CD8-positive, alpha-beta T cell (primary cell): ENCODE measurements at regions of chr11 and their contacts with region 1.

Region 1: GRCh38 chr11:85810871-85811611 is at the start of gene SYTL2:
- DNase-seq: peak; percentile 53 to 89 (median 74)
- ATAC-seq: peak; percentile 78
- H3K4me3 ChIP-seq: peak within 1 kb of the TSS; percentile 68 to 85
- H3K4me3 Mint-ChIP-seq: peak within 1 kb of the TSS; percentile 93
- H3K27ac ChIP-seq: peak within 1 kb of the TSS; percentile 50 to 56
- H3K27ac Mint-ChIP-seq: peak within 1 kb of the TSS; percentile 93
- H3K4me1 ChIP-seq: peaks cover 19% of the 10 kb centered on the region
- H3K4me1 Mint-ChIP-seq: peaks cover 48% of the 10 kb centered on the region
- H3K27me3 ChIP-seq: no peaks in the 10 kb centered on the region
- H3K27me3 Mint-ChIP-seq: peaks cover 2% of the 10 kb centered on the region
- CTCF ChIP-seq: no peak
- total RNA-seq, gene SYTL2: 37.2 to 43.6 TPM

Region 2: DNA sequence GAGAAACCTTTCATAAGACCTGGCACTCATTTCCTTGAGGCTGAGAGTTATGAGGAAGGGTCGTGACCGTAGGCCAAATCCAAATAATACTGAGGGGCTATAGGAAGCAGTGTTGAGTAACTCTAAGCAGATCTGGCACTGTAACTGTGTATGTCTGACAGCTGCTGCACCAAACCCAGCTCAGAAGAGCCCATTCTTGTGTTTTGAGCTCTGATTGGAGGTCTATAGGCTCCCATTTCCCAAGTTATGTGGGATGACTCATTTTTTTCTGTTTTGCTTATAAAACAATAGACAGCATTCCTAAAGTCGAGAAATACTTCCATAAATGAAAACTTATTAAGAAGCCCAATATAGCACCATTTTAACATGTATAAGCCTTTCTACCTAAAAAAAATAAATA is 829.7 kb before region 1 on chr11:
- CTCF ChIA-PET with region 1: no interaction called
- POLR2A ChIA-PET with region 1: no interaction called
- intact Hi-C with region 1: no loop called
- DNase-seq: no peak
- ATAC-seq: no peak
- H3K4me3 ChIP-seq: no peak overlapping the region
- H3K4me3 Mint-ChIP-seq: no peak overlapping the region
- H3K27ac ChIP-seq: no peak overlapping the region
- H3K27ac Mint-ChIP-seq: no peak overlapping the region
- H3K4me1 ChIP-seq: no peaks in the 10 kb centered on the region
- H3K4me1 Mint-ChIP-seq: no peaks in the 10 kb centered on the region
- H3K27me3 ChIP-seq: no peaks in the 10 kb centered on the region
- H3K27me3 Mint-ChIP-seq: no peaks in the 10 kb centered on the region
- CTCF ChIP-seq: no peak

Region 3: GRCh38 chr11:85647604-85648299 is 163.3 kb before region 1 on chr11 and contains the start of gene TMEM126A:
- CTCF ChIA-PET with region 1: no interaction called
- POLR2A ChIA-PET with region 1: no interaction called
- intact Hi-C with region 1: no loop called
- DNase-seq: peak; percentile 77 to 94 (median 90)
- ATAC-seq: peak; percentile 98
- H3K4me3 ChIP-seq: peak within 1 kb of the TSS; percentile 82 to 92
- H3K4me3 Mint-ChIP-seq: peak within 1 kb of the TSS; percentile 92
- H3K27ac ChIP-seq: peak within 1 kb of the TSS; percentile 75 to 90
- H3K27ac Mint-ChIP-seq: peak within 1 kb of the TSS; percentile 96
- H3K4me1 ChIP-seq: peaks cover 18% of the 10 kb centered on the region
- H3K4me1 Mint-ChIP-seq: peaks cover 39% of the 10 kb centered on the region
- H3K27me3 ChIP-seq: no peaks in the 10 kb centered on the region
- H3K27me3 Mint-ChIP-seq: peaks cover 17% of the 10 kb centered on the region
- CTCF ChIP-seq: no peak
- total RNA-seq, gene TMEM126A: 23.3 to 26.8 TPM

Region 4: DNA sequence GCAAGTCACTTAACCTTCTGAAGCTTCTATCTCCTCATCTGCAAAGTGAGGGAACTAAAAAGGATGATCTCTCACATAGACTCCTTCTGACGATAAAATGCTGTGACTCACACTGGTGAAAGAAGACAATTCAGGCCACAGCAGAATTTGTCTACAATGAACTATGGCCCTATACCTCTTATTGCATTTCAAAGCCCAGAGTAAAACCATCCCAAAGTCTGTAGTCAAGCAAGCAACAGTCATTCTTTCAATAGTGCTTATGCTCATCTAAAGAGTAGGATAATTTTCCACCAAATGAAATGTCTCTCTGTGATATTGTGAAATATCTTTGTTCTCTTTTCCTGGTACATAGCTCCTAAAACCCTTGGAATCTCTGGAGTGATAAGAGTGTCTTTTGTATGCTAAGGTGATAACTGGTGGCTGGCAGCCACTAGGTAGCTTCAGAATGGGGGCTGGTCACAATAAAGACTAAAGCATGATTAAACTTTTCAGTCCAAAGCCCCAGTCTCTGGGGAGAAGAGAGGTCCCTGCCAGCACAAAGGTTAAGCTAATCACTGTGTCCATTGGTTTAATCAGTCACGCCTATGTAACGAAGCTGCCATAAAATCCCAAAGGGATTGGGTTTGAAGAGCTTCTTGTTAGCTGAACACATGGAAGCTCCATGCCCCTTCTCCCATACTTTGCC is 30.9 kb before region 1 on chr11:
- CTCF ChIA-PET with region 1: no interaction called
- POLR2A ChIA-PET with region 1: no interaction called
- intact Hi-C with region 1: no loop called
- DNase-seq: no peak
- ATAC-seq: no peak
- H3K4me3 ChIP-seq: no peak overlapping the region
- H3K4me3 Mint-ChIP-seq: no peak overlapping the region
- H3K27ac ChIP-seq: no peak overlapping the region
- H3K27ac Mint-ChIP-seq: no peak overlapping the region
- H3K4me1 ChIP-seq: peaks cover 17% of the 10 kb centered on the region
- H3K4me1 Mint-ChIP-seq: peaks cover 48% of the 10 kb centered on the region
- H3K27me3 ChIP-seq: no peaks in the 10 kb centered on the region
- H3K27me3 Mint-ChIP-seq: no peaks in the 10 kb centered on the region
- CTCF ChIP-seq: no peak

Region 5: DNA sequence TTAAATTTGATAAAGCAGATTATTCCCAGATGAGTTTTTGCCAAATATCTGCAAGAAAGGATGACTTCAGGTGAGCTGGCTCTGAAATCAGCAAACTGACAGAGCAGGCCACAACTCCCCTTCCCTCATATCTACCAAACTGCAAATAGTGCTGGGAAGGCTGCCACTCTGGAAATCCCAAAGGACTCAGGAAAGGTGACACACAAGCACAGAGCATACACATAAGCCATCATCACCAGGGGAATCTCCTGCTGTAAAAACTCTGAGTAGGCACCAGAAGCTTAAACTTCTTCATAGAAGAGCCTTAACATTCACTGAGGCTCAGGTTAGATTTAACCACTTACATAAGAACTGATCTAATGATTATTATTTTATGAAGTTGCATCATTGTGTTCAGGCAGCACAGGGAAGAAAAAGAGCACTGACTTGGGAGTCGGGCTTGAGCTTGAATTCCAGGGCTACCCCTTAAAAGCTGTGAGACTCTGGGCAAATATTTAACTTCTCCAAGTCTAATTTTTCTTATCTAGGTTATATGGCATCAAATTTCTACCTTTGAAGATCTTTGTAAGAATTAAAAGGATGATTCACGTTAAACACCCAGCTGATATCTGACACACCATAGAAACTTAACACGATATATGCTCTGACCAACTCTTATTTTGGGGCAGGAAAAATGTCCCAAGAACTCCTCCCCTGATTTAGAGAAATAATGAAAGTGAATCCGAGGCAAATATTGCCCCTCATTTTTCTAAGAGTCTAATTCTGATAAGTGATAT is 15.1 kb before region 1 on chr11:
- CTCF ChIA-PET with region 1: interaction called, 12 read pairs
- POLR2A ChIA-PET with region 1: interaction called, 5 read pairs
- intact Hi-C with region 1: no loop called
- DNase-seq: no peak
- ATAC-seq: no peak
- H3K4me3 ChIP-seq: no peak overlapping the region
- H3K4me3 Mint-ChIP-seq: no peak overlapping the region
- H3K27ac ChIP-seq: no peak overlapping the region
- H3K27ac Mint-ChIP-seq: no peak overlapping the region
- H3K4me1 ChIP-seq: no peaks in the 10 kb centered on the region
- H3K4me1 Mint-ChIP-seq: peaks cover 38% of the 10 kb centered on the region
- H3K27me3 ChIP-seq: no peaks in the 10 kb centered on the region
- H3K27me3 Mint-ChIP-seq: no peaks in the 10 kb centered on the region
- CTCF ChIP-seq: no peak

Region 6: DNA sequence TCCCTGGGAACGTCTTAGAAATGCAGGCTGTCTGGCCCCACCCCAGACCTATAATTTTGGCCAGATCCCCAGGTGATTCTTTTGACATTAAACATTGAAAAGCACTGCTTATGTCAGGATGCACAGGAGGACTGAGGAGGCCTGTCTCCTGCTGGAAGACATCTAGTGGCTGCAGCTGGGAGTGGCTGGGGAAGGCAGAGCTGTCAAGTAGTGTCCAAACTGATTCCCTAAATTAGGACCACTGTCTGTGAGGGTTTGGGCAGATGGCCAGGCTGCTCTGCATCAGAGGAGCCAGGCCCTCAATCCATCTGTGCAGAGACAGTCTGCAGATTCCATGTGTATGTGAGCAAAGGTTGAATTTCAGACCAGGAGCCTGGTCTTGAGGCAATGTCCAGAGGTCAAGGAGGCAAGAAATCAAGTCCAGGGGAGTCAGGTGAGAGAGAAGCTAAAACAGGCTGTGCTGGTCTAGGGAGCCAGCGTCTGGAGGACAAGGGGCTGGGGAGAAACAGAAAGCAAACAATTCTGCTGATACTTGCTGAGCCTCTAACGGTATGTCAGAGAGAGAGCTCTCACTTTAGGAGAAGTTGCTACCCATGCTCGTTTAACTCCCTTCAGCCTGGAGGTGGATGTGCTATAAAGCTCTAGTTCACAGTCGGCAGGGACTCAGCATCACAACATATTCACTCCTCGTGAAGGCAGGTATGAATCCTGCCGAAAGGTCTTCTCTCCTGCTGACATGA is 15.2 kb after region 1 on chr11:
- CTCF ChIA-PET with region 1: interaction called, 7 read pairs
- POLR2A ChIA-PET with region 1: interaction called, 13 read pairs
- intact Hi-C with region 1: loop called (anchors 1 kb)
- DNase-seq: peak in 4 of 9 experiments; percentile 17 to 46 (median 30)
- ATAC-seq: no peak
- H3K4me3 ChIP-seq: no peak overlapping the region
- H3K4me3 Mint-ChIP-seq: peak overlapping the region; percentile 12
- H3K27ac ChIP-seq: no peak overlapping the region
- H3K27ac Mint-ChIP-seq: peak overlapping the region; percentile 92
- H3K4me1 ChIP-seq: peaks cover 63% of the 10 kb centered on the region
- H3K4me1 Mint-ChIP-seq: peaks cover 66% of the 10 kb centered on the region
- H3K27me3 ChIP-seq: no peaks in the 10 kb centered on the region
- H3K27me3 Mint-ChIP-seq: no peaks in the 10 kb centered on the region
- CTCF ChIP-seq: peak; percentile 17

Region 7: DNA sequence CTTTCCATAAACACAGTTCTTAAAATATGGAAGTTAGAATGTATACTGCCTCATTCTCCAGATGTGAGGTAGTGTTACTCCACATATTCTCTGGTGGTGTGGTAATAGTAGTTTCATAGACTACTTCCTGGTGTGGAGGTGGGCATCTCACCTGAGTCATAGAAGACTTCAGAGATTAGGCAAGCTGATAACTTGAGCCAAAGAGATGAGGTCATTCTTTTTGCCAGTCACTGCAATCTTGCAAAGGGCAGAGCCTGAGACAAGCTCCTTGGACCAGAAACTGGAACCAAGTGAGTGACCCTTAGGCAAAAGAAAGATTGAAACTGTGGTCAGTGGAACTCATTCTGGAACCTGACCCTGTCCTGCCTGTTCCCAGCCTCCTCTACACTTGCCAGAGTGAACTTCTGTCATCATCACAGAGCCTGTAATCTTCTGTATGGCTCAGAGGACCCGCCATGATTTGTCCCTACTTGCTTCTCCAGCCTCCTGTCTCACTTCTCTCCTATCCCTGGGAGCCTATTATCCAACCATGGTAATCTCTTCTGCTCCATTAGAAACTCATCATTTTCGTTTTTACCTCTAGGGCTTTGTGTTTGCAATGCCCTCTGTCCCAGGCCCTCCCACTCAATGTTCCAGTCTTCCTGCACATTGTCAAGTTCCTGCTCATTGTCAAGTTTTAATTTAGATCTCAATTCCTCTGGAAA is 33.5 kb after region 1 on chr11:
- CTCF ChIA-PET with region 1: no interaction called
- POLR2A ChIA-PET with region 1: no interaction called
- intact Hi-C with region 1: no loop called
- DNase-seq: no peak
- ATAC-seq: no peak
- H3K4me3 ChIP-seq: no peak overlapping the region
- H3K4me3 Mint-ChIP-seq: no peak overlapping the region
- H3K27ac ChIP-seq: no peak overlapping the region
- H3K27ac Mint-ChIP-seq: no peak overlapping the region
- H3K4me1 ChIP-seq: no peaks in the 10 kb centered on the region
- H3K4me1 Mint-ChIP-seq: no peaks in the 10 kb centered on the region
- H3K27me3 ChIP-seq: no peaks in the 10 kb centered on the region
- H3K27me3 Mint-ChIP-seq: no peaks in the 10 kb centered on the region
- CTCF ChIP-seq: no peak